ENCODE measurements at regions of chr10 and their contacts with region 1.

Region 1: GRCh38 chr10:52578871-52579405 is 193.6 kb downstream of the MBL2 start:
- DNase-seq: no peak
- CTCF ChIP-seq: no peak

Region 2: GRCh38 chr10:52308251-52309031 is 270.5 kb before region 1 on chr10:
- in situ Hi-C with region 1: loop called (anchors 25 kb)
- DNase-seq: peak; percentile 72
- CTCF ChIP-seq: peak; percentile 56

Region 3: DNA sequence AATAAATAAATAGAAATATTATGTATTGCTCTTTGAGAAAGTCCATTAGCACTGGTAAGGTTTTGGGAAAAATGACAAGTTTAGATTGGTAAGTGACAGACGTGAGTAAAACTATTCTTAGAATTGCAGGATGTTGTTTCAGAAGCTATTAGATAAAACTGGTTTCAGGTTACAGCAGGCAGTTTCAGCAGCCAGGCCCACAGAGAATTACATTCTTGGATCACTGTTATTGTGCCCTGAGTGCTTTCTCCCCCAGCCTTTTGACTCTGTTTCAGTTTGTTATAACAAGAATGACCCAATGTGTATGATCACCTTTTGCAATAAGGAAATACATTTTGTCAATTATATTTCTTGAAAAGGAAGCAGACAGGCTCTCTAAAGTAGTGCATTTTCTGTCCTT is 178.4 kb before region 1 on chr10:
- in situ Hi-C with region 1: no loop called
- DNase-seq: no peak
- CTCF ChIP-seq: no peak

Measured in GM13977 (cell line).